HepG2 (cell line): ENCODE measurements at regions of chr5 and their contacts with region 1.

Region 1: GRCh38 chr5:172479044-172479783 is 24.9 kb upstream of the SH3PXD2B start:
- DNase-seq: peak; percentile 89
- ATAC-seq: peak; percentile 98
- H3K4me3 ChIP-seq: no peak overlapping the region
- H3K27ac ChIP-seq: no peak overlapping the region
- H3K4me1 ChIP-seq: no peaks in the 10 kb centered on the region
- H3K27me3 ChIP-seq: peaks cover 0 to 5% of the 10 kb centered on the region in 2 experiments; a peak in 1 of 5 replicates
- CTCF ChIP-seq: peak; percentile 95
- EP300 ChIP-seq: no peak
- POLR2A ChIP-seq: no peak
- RAD21 ChIP-seq: peak; percentile 96

Region 2: DNA sequence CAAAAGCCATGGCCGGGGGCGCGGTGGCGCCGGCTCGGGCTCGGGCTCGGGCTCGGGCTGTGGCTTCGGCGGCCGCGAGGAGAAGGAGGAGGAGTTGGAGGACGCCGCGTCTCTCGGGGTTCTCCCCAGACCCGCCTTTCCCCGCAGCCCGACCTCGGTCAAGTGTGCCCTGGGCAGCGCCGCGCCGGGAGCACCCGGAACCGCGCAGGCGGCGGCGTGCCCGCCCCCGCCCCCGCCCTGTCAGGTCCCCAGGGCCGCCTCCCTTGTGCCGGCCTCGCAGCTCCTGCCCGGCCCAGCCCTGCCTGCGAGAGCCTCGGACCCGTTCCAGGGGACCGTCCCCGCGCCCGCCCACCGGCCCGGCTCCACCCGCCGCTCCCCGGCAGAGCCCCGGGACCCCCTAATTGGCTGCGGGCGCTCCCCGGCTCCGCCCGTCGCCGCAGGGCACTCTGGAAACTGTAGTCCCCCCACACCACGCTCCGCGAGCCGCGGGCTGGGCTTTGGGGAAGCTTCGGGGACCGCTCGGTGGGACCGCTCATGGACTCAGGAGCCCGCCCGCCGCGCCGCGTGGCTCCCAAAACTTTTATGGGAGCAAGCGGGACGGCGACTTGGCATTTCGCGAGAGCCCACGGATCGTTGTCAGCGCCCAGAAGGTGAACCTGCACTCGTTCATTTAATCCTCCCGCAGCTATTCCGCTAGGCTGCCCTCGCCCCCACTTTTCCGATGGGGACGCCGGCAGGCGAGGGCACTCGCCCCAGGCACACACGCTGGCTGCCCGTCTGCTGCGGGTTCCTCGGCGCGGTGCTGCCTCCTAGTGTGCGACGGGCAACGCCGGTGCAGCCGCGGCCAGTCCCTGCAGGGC is 291.0 kb before region 1 on chr5 and contains the start of gene STK10:
- CTCF ChIA-PET with region 1: no interaction called
- POLR2A ChIA-PET with region 1: no interaction called
- in situ Hi-C with region 1: no loop called
- intact Hi-C with region 1: no loop called
- DNase-seq: peak; percentile 80
- ATAC-seq: peak; percentile 92
- H3K4me3 ChIP-seq: peak within 1 kb of the TSS; percentile 91 to 95 (median 93)
- H3K27ac ChIP-seq: peak within 1 kb of the TSS; percentile 61
- H3K4me1 ChIP-seq: peaks cover 29% of the 10 kb centered on the region
- H3K27me3 ChIP-seq: no peaks in the 10 kb centered on the region
- CTCF ChIP-seq: peak; percentile 99
- EP300 ChIP-seq: no peak; a peak in 2 of 4 replicates
- POLR2A ChIP-seq: peak in 1 of 2 experiments; percentile 61; a peak in 2 of 4 replicates
- RAD21 ChIP-seq: peak; percentile 99
- total RNA-seq, gene STK10: 6.2 and 7.2 TPM in 2 replicates

Region 3: DNA sequence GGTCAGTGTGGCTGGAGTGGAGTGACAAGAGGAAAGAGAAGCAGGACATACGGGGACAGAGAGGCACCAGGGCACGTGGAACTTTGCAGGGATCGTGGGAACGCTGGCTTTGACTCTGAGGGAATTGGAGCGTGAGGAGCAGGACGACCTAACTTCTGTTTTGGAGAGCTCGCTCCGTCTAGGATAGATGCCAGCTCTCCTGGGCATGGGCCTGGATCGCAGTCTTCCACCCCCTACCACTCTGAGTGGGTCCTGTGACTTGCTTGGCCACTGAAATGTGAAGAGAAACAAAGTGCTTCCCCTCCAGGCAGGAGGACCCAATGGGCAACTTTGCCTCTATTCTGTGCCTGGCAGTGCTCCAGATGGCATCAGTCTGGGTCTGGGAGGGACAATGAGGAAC is 16.2 kb before region 1 on chr5:
- CTCF ChIA-PET with region 1: no interaction called
- POLR2A ChIA-PET with region 1: no interaction called
- in situ Hi-C with region 1: no loop called
- intact Hi-C with region 1: no loop called
- DNase-seq: no peak
- ATAC-seq: no peak
- H3K4me3 ChIP-seq: no peak overlapping the region
- H3K27ac ChIP-seq: no peak overlapping the region
- H3K4me1 ChIP-seq: peaks cover 31% of the 10 kb centered on the region
- H3K27me3 ChIP-seq: peaks cover 2 to 9% of the 10 kb centered on the region in 2 experiments; a peak in 2 of 5 replicates
- CTCF ChIP-seq: no peak
- EP300 ChIP-seq: no peak
- POLR2A ChIP-seq: no peak
- RAD21 ChIP-seq: no peak

Region 4: GRCh38 chr5:172574871-172575223 is 95.6 kb after region 1 on chr5:
- CTCF ChIA-PET with region 1: no interaction called
- POLR2A ChIA-PET with region 1: no interaction called
- in situ Hi-C with region 1: no loop called
- intact Hi-C with region 1: no loop called
- DNase-seq: no peak
- ATAC-seq: no peak
- H3K4me3 ChIP-seq: no peak overlapping the region
- H3K27ac ChIP-seq: no peak overlapping the region
- H3K4me1 ChIP-seq: peaks cover 9% of the 10 kb centered on the region
- H3K27me3 ChIP-seq: peaks cover 6 to 19% of the 10 kb centered on the region in 2 experiments; a peak in 3 of 5 replicates
- CTCF ChIP-seq: no peak
- EP300 ChIP-seq: no peak
- POLR2A ChIP-seq: no peak
- RAD21 ChIP-seq: no peak

Region 5: GRCh38 chr5:172646716-172647285 is 167.6 kb after region 1 on chr5:
- CTCF ChIA-PET with region 1: no interaction called
- POLR2A ChIA-PET with region 1: no interaction called
- in situ Hi-C with region 1: no loop called
- intact Hi-C with region 1: no loop called
- DNase-seq: peak; percentile 25
- ATAC-seq: peak; percentile 91
- H3K4me3 ChIP-seq: no peak overlapping the region
- H3K27ac ChIP-seq: no peak overlapping the region
- H3K4me1 ChIP-seq: no peaks in the 10 kb centered on the region
- H3K27me3 ChIP-seq: peaks cover 0 to 28% of the 10 kb centered on the region in 2 experiments; a peak in 2 of 5 replicates
- CTCF ChIP-seq: peak; percentile 37; the same call in 1 of the 2 replicates
- EP300 ChIP-seq: no peak
- POLR2A ChIP-seq: no peak
- RAD21 ChIP-seq: no peak

Region 6: GRCh38 chr5:172659909-172660628 is 180.9 kb after region 1 on chr5:
- CTCF ChIA-PET with region 1: no interaction called
- POLR2A ChIA-PET with region 1: no interaction called
- in situ Hi-C with region 1: no loop called
- intact Hi-C with region 1: loop called (anchors 1 kb)
- DNase-seq: peak; percentile 95
- ATAC-seq: peak; percentile 94
- H3K4me3 ChIP-seq: peak overlapping the region; percentile 20 to 67 (median 36); a peak in 5 of 6 replicates
- H3K27ac ChIP-seq: peak overlapping the region; percentile 93
- H3K4me1 ChIP-seq: peaks cover 47% of the 10 kb centered on the region
- H3K27me3 ChIP-seq: 0 out of 5 replicates have a peak, but pooled peaks cover 0 to under 1% of the 10 kb centered on the region in 2 experiments
- CTCF ChIP-seq: peak; percentile 62
- EP300 ChIP-seq: peak in 1 of 2 experiments; percentile 53; a peak in 1 of 4 replicates
- POLR2A ChIP-seq: peak; percentile 30 to 67; a peak in 3 of 4 replicates
- RAD21 ChIP-seq: peak; percentile 51

Region 7: DNA sequence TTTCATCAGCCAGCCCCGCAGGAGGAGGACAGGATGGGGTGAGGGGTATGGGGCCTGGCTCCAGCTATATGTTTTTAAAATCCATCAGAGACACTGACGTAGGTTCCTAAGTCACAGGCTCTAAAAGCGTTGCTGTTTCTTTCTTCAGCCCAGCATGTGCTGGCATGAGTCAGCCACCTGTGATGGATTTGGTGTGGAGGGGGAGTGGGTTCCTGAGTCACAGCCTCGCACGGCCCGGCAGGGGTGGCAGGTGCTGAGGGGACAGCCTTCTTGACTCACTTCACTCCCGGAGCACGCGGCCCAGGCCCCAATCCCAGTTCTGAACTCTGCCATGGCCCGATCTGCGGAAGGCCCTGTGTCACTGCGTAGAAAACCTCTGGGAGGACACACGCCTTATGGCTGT is 441.2 kb after region 1 on chr5:
- CTCF ChIA-PET with region 1: no interaction called
- POLR2A ChIA-PET with region 1: no interaction called
- in situ Hi-C with region 1: loop called (anchors 10 kb)
- intact Hi-C with region 1: no loop called
- DNase-seq: no peak
- ATAC-seq: no peak
- H3K4me3 ChIP-seq: no peak overlapping the region
- H3K27ac ChIP-seq: no peak overlapping the region
- H3K4me1 ChIP-seq: peaks cover 5% of the 10 kb centered on the region; the same call in 1 of the 2 replicates
- H3K27me3 ChIP-seq: no peaks in the 10 kb centered on the region
- CTCF ChIP-seq: no peak
- EP300 ChIP-seq: no peak
- POLR2A ChIP-seq: no peak
- RAD21 ChIP-seq: no peak